MCF 10A (cell line): ENCODE measurements at regions of chr7 and their contacts with region 1.

Region 1: GRCh38 chr7:75878769-75879611 is at the start of gene RHBDD2:
- DNase-seq: peak; percentile 93
- H3K4me3 Mint-ChIP-seq: peak within 1 kb of the TSS; percentile 85
- H3K27ac Mint-ChIP-seq: peak within 1 kb of the TSS; percentile 78
- H3K4me1 Mint-ChIP-seq: peaks cover 7% of the 10 kb centered on the region
- H3K27me3 Mint-ChIP-seq: no peaks in the 10 kb centered on the region
- CTCF ChIP-seq: no peak
- total RNA-seq, gene RHBDD2: 36.1 and 38.6 TPM in 2 replicates

Region 2: DNA sequence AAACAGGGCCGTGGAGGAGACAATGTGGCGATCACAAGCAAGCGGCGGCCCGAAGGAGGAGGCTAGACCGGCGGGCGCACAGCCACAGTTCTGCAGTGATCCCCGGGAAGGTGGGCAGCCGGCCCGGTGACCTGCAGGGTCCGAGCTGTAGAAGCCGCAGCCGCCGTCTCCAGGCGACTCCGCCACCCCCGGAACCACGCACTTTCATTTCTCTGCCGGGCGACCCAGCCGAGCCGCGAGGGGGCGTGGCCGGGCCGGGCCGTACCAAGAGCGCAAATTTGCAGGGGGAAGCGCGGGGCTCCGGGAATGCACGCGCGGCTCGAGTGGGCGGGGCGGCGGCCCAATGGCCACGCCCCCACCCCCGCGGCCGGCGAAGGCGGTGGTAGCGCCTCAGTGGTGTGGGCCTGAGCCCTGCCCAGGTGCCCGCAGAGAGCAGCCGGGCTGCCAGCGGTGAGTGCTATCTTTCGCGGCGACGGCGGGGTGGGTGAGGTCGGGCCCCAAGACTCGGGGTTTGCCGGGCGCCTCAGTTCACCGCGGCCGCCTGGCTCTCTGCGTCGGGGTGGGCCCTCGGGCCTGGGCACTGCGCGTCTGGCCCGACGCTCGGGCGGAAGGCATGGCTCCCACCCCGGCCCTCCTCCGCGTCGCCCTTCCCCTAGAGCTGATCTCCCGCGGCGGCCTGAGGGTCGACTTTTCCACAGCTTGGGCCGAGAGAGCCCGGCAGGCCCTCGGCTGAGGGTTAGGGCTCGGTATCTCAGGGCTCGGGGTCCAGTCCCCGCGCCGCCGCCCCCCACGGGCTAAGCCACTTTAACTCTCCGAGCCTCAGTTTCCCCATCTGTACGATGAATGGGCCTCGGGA is 36.0 kb after region 1 on chr7 and contains the start of gene POR:
- CTCF ChIA-PET with region 1: interaction called, 3 read pairs
- POLR2A ChIA-PET with region 1: interaction called, 20 read pairs
- intact Hi-C with region 1: no loop called
- DNase-seq: peak; percentile 89
- H3K4me3 Mint-ChIP-seq: peak within 1 kb of the TSS; percentile 83
- H3K27ac Mint-ChIP-seq: peak within 1 kb of the TSS; percentile 87
- H3K4me1 Mint-ChIP-seq: peaks cover 10% of the 10 kb centered on the region
- H3K27me3 Mint-ChIP-seq: no peaks in the 10 kb centered on the region
- CTCF ChIP-seq: no peak
- total RNA-seq, gene POR: 45.1 and 58.0 TPM in 2 replicates

Region 3: GRCh38 chr7:75945297-75946168 is 66.5 kb after region 1 on chr7:
- CTCF ChIA-PET with region 1: no interaction called
- POLR2A ChIA-PET with region 1: interaction called, 4 read pairs
- intact Hi-C with region 1: loop called (anchors 2 kb)
- DNase-seq: peak; percentile 54
- H3K4me3 Mint-ChIP-seq: no peak overlapping the region
- H3K27ac Mint-ChIP-seq: peak overlapping the region; percentile 81
- H3K4me1 Mint-ChIP-seq: peaks cover 27% of the 10 kb centered on the region
- H3K27me3 Mint-ChIP-seq: no peaks in the 10 kb centered on the region
- CTCF ChIP-seq: no peak

Region 4: GRCh38 chr7:76108540-76109241 is 229.7 kb after region 1 on chr7:
- CTCF ChIA-PET with region 1: no interaction called
- POLR2A ChIA-PET with region 1: no interaction called
- intact Hi-C with region 1: no loop called
- DNase-seq: no peak
- H3K4me3 Mint-ChIP-seq: no peak overlapping the region
- H3K27ac Mint-ChIP-seq: no peak overlapping the region
- H3K4me1 Mint-ChIP-seq: peaks cover 13% of the 10 kb centered on the region
- H3K27me3 Mint-ChIP-seq: no peaks in the 10 kb centered on the region
- CTCF ChIP-seq: no peak

Region 5: GRCh38 chr7:76403780-76404494 is 524.9 kb after region 1 on chr7:
- CTCF ChIA-PET with region 1: no interaction called
- POLR2A ChIA-PET with region 1: no interaction called
- intact Hi-C with region 1: no loop called
- DNase-seq: no peak
- H3K4me3 Mint-ChIP-seq: no peak overlapping the region
- H3K27ac Mint-ChIP-seq: no peak overlapping the region
- H3K4me1 Mint-ChIP-seq: peaks cover 5% of the 10 kb centered on the region
- H3K27me3 Mint-ChIP-seq: no peaks in the 10 kb centered on the region
- CTCF ChIP-seq: no peak